CD4-positive, alpha-beta memory T cell (primary cell): ENCODE measurements at regions of chr4 and their contacts with region 1.

Region 1: DNA sequence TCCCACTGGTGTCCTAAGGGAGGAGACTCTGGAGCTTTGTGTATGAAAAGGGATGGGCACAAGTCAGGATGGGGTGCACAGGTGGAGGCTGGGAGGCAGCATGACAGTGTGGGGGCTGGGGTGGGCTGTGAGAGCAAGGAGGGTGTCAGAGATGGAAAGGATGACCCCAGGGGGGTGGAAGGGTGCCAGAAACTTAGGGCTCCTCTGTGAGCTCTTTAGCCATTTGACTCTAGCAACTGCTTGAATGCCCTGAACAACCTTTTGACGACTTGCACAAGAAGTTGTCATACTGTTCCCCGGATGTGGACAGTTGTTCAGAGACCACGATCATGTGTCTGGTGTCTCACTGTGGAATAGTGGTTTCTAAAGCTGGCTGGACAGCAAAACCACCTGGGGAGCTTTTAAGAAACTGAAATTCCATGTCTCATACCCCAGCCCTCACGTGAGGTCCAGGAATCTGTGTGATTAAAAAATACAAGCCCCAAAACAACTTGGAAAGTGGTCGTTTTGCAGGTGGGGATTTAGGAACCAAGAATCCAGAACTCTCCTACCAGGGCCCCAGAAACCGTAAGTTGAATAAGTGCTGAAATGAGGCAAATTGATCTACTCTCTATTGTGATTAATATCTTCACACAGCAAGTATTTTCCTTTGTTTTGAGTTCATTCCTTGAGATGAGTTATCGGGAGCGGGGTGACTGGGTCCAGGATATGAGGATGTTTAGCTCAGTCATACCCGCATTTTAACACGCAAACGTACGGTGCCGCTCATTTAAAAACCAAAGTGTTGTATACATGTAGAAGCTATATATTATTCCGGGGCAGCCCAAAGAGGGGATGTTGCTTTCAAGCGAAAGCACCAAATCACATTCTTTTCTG is 3.4 kb downstream of the RHOH start:
- DNase-seq: peak; percentile 62 to 87 (median 66)
- H3K4me3 ChIP-seq: peak overlapping the region; percentile 84 to 98
- H3K4me3 Mint-ChIP-seq: peak overlapping the region; percentile 95 to 100 (median 98)
- H3K27ac ChIP-seq: peak overlapping the region; percentile 99
- H3K27ac Mint-ChIP-seq: peak overlapping the region; percentile 98 to 100 (median 100)
- H3K4me1 ChIP-seq: peaks cover 44% of the 10 kb centered on the region
- H3K4me1 Mint-ChIP-seq: peaks cover 30 to 82% (median 38%) of the 10 kb centered on the region in 4 donors
- H3K27me3 ChIP-seq: no peaks in the 10 kb centered on the region
- H3K27me3 Mint-ChIP-seq: no peaks in the 10 kb centered on the region

Region 2: GRCh38 chr4:39353478-39354253 is 846.6 kb before region 1 on chr4:
- CTCF ChIA-PET with region 1: no interaction called
- POLR2A ChIA-PET with region 1: no interaction called
- intact Hi-C with region 1: loop called (anchors 10 kb)
- DNase-seq: peak; percentile 46 to 70 (median 63)
- H3K4me3 ChIP-seq: peak overlapping the region; percentile 3 to 61
- H3K4me3 Mint-ChIP-seq: peak overlapping the region; percentile 79 to 92 (median 84)
- H3K27ac ChIP-seq: peak overlapping the region; percentile 73
- H3K27ac Mint-ChIP-seq: peak overlapping the region; percentile 91 to 98 (median 94)
- H3K4me1 ChIP-seq: peaks cover 58% of the 10 kb centered on the region
- H3K4me1 Mint-ChIP-seq: peaks cover 39 to 77% (median 53%) of the 10 kb centered on the region in 4 donors
- H3K27me3 ChIP-seq: no peaks in the 10 kb centered on the region
- H3K27me3 Mint-ChIP-seq: no peaks in the 10 kb centered on the region

Region 3: DNA sequence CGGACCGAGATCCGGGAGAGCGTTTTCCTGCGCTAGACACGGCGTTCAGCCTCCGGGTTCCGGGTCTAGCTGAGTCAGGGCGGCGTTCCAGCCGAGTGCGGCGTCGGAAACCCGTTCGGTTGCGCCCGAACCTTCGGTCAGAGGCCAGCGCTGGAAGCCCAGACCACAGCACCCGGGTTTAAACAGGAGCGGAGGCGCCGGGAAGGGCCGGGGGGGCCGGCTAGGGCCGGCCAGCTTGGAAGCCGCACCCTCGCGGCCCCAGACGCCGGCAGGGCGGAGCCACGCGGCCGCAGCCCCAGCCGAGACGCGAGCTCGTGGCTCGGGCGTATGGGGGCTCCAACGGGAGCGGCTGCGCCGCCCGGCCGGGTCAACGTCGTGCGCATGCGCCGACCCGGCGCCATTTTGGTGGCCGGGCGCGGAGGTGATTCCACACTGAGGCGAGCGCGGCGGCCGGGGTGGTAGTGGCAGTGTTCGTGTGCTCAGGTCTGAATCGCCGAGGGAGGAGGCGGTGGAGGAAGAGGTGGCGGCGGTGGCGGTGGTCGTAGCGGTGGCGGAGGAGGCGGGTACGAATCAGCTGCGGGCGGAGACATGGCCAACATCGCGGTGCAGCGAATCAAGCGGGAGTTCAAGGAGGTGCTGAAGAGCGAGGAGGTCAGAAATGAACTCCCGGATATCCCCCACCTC is 502.4 kb before region 1 on chr4 and contains the start of gene UBE2K:
- CTCF ChIA-PET with region 1: no interaction called
- POLR2A ChIA-PET with region 1: no interaction called
- intact Hi-C with region 1: loop called (anchors 5 kb)
- DNase-seq: peak; percentile 86 to 93 (median 91)
- H3K4me3 ChIP-seq: peak within 1 kb of the TSS; percentile 79 to 93
- H3K4me3 Mint-ChIP-seq: peak within 1 kb of the TSS; percentile 96 to 100 (median 98)
- H3K27ac ChIP-seq: peak within 1 kb of the TSS; percentile 88
- H3K27ac Mint-ChIP-seq: peak within 1 kb of the TSS; percentile 94 to 100 (median 99)
- H3K4me1 ChIP-seq: peaks cover 50% of the 10 kb centered on the region
- H3K4me1 Mint-ChIP-seq: peaks cover 27 to 54% (median 37%) of the 10 kb centered on the region in 4 donors
- H3K27me3 ChIP-seq: no peaks in the 10 kb centered on the region
- H3K27me3 Mint-ChIP-seq: no peaks in the 10 kb centered on the region
- total RNA-seq, gene UBE2K: 45.0 to 51.2 TPM

Region 4: GRCh38 chr4:40149960-40150385 is 50.3 kb before region 1 on chr4:
- CTCF ChIA-PET with region 1: interaction called, 11 read pairs
- POLR2A ChIA-PET with region 1: interaction called, 27 read pairs
- intact Hi-C with region 1: loop called (anchors 1 kb)
- DNase-seq: peak; percentile 75 to 81 (median 77)
- H3K4me3 ChIP-seq: no peak overlapping the region
- H3K4me3 Mint-ChIP-seq: peak overlapping the region in 2 of 8 donors; percentile 44 to 65
- H3K27ac ChIP-seq: no peak overlapping the region
- H3K27ac Mint-ChIP-seq: peak overlapping the region; percentile 27 to 91 (median 77)
- H3K4me1 ChIP-seq: peaks cover 22% of the 10 kb centered on the region
- H3K4me1 Mint-ChIP-seq: peaks cover 20 to 34% (median 25%) of the 10 kb centered on the region in 4 donors
- H3K27me3 ChIP-seq: no peaks in the 10 kb centered on the region
- H3K27me3 Mint-ChIP-seq: no peaks in the 10 kb centered on the region

Region 5: GRCh38 chr4:40212674-40213527 is 12.7 kb after region 1 on chr4:
- CTCF ChIA-PET with region 1: interaction called, 12 read pairs
- POLR2A ChIA-PET with region 1: interaction called, 1,182 read pairs
- intact Hi-C with region 1: loop called (anchors 1 kb)
- DNase-seq: no peak
- H3K4me3 ChIP-seq: peak overlapping the region; percentile 2 to 11
- H3K4me3 Mint-ChIP-seq: peak overlapping the region; percentile 61 to 87 (median 80)
- H3K27ac ChIP-seq: peak overlapping the region; percentile 78
- H3K27ac Mint-ChIP-seq: peak overlapping the region; percentile 95 to 100 (median 96)
- H3K4me1 ChIP-seq: peaks cover 98% of the 10 kb centered on the region
- H3K4me1 Mint-ChIP-seq: peaks cover 74 to 95% (median 85%) of the 10 kb centered on the region in 4 donors
- H3K27me3 ChIP-seq: no peaks in the 10 kb centered on the region
- H3K27me3 Mint-ChIP-seq: no peaks in the 10 kb centered on the region

Region 6: DNA sequence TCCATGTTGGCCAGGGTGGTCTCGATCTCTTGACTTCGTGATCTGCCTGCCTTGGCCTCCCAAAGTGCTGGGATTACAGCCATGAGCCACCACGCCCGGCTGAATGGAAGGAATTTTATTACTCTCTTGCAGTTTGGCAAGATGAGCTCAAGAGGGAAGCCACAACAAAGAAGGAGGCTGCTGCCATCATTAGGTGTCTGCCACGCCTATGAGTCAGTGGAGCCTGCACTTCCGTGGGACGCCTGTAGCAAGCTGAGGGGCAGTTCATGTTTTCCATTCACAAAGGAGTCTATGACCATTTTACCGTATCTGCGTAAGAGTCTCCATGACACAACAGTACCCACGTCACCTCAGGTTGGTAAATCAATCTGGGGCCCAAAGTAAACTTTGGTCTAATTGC is 83.7 kb after region 1 on chr4:
- CTCF ChIA-PET with region 1: interaction called, 12 read pairs
- POLR2A ChIA-PET with region 1: interaction called, 14 read pairs
- intact Hi-C with region 1: no loop called
- DNase-seq: peak; percentile 71 to 97 (median 86)
- H3K4me3 ChIP-seq: no peak overlapping the region
- H3K4me3 Mint-ChIP-seq: peak overlapping the region in 7 of 8 donors; percentile 70 to 86 (median 79)
- H3K27ac ChIP-seq: peak overlapping the region; percentile 49
- H3K27ac Mint-ChIP-seq: peak overlapping the region; percentile 92 to 98 (median 96)
- H3K4me1 ChIP-seq: peaks cover 39% of the 10 kb centered on the region
- H3K4me1 Mint-ChIP-seq: peaks cover 34 to 73% (median 55%) of the 10 kb centered on the region in 4 donors
- H3K27me3 ChIP-seq: no peaks in the 10 kb centered on the region
- H3K27me3 Mint-ChIP-seq: peaks cover 0 to 2% of the 10 kb centered on the region in 2 donors

Region 7: DNA sequence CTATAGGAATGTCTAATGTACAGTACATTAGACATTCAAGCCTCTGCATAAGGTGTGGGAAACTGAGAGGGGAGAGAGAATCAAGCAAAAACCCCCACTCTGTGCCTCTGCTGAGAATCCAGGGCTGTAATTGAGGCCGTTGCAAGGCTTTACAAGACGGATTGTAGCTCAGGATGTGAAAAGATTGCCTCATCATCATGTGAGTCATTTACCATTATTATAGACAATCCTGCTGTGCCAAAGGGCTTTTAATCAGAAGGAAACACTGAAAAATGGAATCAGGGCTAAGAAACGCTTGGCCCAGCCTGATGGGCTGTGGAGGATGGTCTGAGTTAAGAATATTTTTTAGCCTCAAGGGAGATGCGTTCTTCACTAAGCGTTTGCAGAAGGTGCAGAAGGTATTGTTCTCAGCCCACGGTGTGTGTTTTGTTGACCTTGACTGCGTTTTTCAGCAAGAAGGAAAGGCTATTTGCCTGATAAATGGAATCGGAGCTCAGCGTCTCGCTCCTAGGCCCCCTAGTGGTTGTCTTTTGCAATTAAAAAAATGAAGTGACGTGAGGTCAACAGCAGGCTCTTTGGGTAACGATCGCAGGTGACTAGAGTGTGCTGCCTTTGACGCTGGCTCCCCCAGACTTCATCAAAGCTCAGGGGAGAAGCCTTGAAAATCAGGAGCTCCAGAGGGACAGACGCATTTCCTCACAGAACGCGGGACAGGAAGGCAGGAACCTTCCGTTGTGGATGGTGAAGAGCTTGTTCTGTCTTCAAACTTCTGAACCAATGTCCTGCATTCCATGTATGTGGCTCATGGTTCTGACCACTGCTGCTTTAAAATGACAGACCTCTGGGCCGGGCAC is 116.8 kb after region 1 on chr4:
- CTCF ChIA-PET with region 1: interaction called, 115 read pairs
- POLR2A ChIA-PET with region 1: interaction called, 179 read pairs
- intact Hi-C with region 1: no loop called
- DNase-seq: peak; percentile 75 to 81 (median 78)
- H3K4me3 ChIP-seq: peak overlapping the region; percentile 7 to 55
- H3K4me3 Mint-ChIP-seq: peak overlapping the region; percentile 74 to 90 (median 84)
- H3K27ac ChIP-seq: peak overlapping the region; percentile 82
- H3K27ac Mint-ChIP-seq: peak overlapping the region; percentile 92 to 97 (median 95)
- H3K4me1 ChIP-seq: peaks cover 31% of the 10 kb centered on the region
- H3K4me1 Mint-ChIP-seq: peaks cover 15 to 37% (median 27%) of the 10 kb centered on the region in 4 donors
- H3K27me3 ChIP-seq: no peaks in the 10 kb centered on the region
- H3K27me3 Mint-ChIP-seq: no peaks in the 10 kb centered on the region